Cardiac septum (tissue), 1 donor: ENCODE measurements at regions of chr12 and their contacts with region 1.

Region 1: GRCh38 chr12:104057771-104058197 is 6.5 kb upstream of the HCFC2 start:
- DNase-seq: no peak

Region 2: DNA sequence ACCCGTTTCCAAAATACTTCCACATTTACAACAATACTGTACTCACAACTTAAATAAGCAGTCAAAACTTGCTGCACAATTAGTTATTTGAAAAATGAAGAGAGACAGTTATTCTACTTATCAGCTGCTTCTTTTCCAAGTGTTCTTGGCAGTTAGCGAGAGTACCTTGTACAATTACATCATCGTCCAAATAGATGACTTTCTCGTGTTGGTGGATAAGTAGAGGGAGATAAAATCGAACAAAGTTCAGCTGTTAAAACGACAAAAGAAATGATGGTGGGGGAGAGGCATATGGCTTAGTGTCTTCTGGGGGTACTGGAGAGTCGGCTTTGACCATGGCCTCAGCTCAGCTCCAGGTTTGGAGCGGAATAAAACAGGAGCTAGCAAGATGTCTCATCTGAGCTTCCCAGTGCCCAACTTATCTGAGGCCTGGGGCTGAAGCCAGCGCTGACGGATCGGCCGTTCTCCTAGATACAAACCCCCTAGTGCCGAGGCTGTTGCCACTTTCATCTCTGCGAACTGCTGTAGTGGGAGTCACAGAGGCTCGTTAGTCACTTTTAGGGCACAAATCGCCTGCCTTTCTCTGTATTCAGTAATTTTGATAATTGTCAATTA is 60.4 kb before region 1 on chr12:
- intact Hi-C with region 1: loop called (anchors 10 kb)
- DNase-seq: no peak